Vagina (tissue), 2 donors: ENCODE measurements at regions of chr9 and their contacts with region 1.

Region 1: DNA sequence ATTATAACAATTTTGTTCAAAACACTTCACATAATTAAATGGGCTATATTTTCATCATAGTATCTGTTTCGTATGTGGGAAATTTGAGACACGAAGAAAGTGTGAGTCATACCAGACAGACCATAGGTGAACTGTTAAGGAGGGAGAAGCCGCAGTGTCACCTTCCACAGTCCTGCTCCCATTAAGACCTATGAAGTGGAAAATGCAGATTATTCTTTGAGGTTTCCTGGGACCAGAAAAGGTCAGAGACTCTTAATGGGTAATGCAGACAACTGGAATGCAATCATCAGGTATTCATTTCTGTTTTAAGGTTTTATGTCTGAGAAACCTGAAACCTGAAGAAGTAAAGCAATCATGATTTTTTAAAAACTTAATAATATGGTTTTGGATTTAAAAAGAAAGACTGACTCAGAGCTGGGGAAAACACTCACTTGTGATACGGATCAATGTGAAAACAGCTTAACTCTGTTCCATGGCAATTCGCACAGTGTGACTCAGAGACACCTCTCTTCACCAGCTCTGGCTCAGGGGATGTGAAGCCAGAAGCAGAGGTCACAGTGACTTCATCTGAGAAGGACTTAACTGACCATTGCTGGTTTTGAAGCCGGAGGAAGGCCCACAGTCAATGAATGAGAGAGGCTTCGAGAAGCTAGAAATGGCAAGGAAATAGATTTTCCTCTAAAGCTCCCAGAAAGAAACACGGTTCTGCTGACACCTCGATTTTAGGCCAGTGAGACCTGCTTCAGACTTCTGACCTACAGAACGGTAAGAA is 17.2 kb upstream of the GCNT1 start:
- DNase-seq: no peak
- H3K4me3 ChIP-seq: no peak overlapping the region
- H3K27ac ChIP-seq: no peak overlapping the region
- H3K4me1 ChIP-seq: no peaks in the 10 kb centered on the region
- H3K27me3 ChIP-seq: no peaks in the 10 kb centered on the region
- CTCF ChIP-seq: no peak
- POLR2A ChIP-seq: no peak

Region 2: DNA sequence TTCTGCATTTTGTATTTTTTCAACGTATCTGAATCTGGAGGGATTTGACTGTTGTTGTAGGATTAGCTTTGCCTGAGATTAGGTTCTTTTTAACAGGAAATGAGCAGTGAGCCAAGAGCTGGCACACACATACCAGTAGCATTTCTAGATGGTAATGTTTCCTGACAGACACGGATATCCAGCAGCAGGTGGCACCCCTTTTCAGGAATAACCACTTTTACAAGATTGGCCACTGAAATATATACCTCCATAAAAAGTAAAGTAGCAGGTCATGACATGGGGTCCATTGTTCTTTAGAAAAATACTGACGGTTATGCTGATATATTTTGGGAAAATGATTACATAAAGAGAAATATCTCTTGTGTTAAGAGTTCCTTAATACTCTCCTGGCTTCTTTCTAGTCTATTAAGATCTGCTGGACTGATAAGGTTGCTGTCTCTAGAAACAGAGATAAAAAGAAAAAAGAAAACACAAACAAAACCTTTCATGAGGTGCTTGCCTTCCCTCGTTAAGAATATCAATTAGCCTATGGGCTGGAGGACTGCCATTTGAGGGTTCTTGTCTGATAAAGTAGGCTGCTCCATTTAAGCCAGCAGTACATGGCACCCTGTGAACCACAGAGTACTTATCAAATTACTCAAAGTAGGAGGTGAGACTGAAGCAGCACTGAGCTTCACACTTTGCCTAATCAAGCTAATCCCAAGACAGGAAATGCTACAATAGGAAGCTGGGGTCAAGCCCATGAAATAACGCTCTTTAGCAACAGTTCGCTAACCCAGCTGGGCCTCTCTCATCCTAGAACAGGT is 220.9 kb after region 1 on chr9:
- intact Hi-C with region 1: loop called (anchors 10 kb)
- DNase-seq: no peak
- H3K4me3 ChIP-seq: no peak overlapping the region
- H3K27ac ChIP-seq: no peak overlapping the region
- H3K4me1 ChIP-seq: no peaks in the 10 kb centered on the region
- H3K27me3 ChIP-seq: no peaks in the 10 kb centered on the region
- CTCF ChIP-seq: no peak
- POLR2A ChIP-seq: no peak

Region 3: DNA sequence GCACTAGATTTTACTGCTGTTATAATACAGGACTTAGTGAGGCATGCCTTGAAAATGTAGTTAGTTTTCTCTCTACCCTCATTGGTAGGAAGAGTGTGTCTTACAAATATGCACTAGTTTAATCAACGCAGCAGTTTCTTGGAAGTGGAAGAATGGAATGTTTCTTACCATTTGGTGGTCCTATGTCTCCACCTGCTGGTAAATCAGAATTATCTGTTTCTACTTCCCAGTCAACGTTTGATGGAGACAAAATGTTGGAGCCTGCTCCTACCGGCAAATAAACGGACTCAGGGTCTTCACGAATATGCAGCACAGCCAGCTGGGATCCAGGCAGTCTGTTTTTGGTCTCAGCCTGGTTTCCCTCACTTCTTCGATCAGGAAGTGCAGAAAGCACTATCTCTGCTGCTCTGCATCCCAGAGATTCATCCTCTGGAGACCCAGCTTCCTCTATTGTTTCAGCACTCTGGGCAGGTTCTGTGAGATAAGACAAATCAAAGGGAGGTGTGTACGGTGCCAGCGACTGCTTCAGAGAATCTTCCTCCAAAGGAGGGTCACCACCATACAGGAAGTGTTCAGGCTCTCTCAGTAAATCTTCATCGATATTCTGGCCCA is 263.0 kb after region 1 on chr9:
- intact Hi-C with region 1: loop called (anchors 5 kb)
- DNase-seq: no peak
- H3K4me3 ChIP-seq: no peak overlapping the region
- H3K27ac ChIP-seq: no peak overlapping the region
- H3K4me1 ChIP-seq: no peaks in the 10 kb centered on the region
- H3K27me3 ChIP-seq: no peaks in the 10 kb centered on the region
- CTCF ChIP-seq: peak; percentile 44 to 73 (median 45)
- POLR2A ChIP-seq: no peak

Region 4: GRCh38 chr9:77158772-77159513 is 717.2 kb after region 1 on chr9:
- intact Hi-C with region 1: loop called (anchors 10 kb)
- DNase-seq: no peak
- H3K4me3 ChIP-seq: no peak overlapping the region
- H3K27ac ChIP-seq: no peak overlapping the region
- H3K4me1 ChIP-seq: peaks cover under 1% of the 10 kb centered on the region
- H3K27me3 ChIP-seq: no peaks in the 10 kb centered on the region
- CTCF ChIP-seq: no peak
- POLR2A ChIP-seq: no peak